ENCODE measurements at regions of chr7 and their contacts with region 1.

Region 1: GRCh38 chr7:974820-975681 is at the start of gene COX19:
- DNase-seq: peak; percentile 91
- H3K4me3 Mint-ChIP-seq: peak within 1 kb of the TSS; percentile 92
- H3K27ac Mint-ChIP-seq: peak within 1 kb of the TSS; percentile 91
- H3K4me1 Mint-ChIP-seq: peaks cover 33% of the 10 kb centered on the region
- H3K27me3 Mint-ChIP-seq: no peaks in the 10 kb centered on the region
- total RNA-seq, gene COX19: 12.6 to 15.2 TPM

Region 2: GRCh38 chr7:101146-102046 is 873.7 kb before region 1 on chr7:
- CTCF ChIA-PET with region 1: no interaction called
- intact Hi-C with region 1: no loop called
- DNase-seq: no peak
- H3K4me3 Mint-ChIP-seq: no peak overlapping the region
- H3K27ac Mint-ChIP-seq: no peak overlapping the region
- H3K4me1 Mint-ChIP-seq: peaks cover 4% of the 10 kb centered on the region
- H3K27me3 Mint-ChIP-seq: peaks cover 3% of the 10 kb centered on the region

Region 3: GRCh38 chr7:726084-726853 is 248.8 kb before region 1 on chr7 and contains the start of gene DNAAF5:
- CTCF ChIA-PET with region 1: no interaction called
- intact Hi-C with region 1: no loop called
- DNase-seq: peak; percentile 88
- H3K4me3 Mint-ChIP-seq: peak within 1 kb of the TSS; percentile 84
- H3K27ac Mint-ChIP-seq: peak within 1 kb of the TSS; percentile 65
- H3K4me1 Mint-ChIP-seq: peaks cover 31% of the 10 kb centered on the region
- H3K27me3 Mint-ChIP-seq: no peaks in the 10 kb centered on the region
- total RNA-seq, gene DNAAF5: 26.2 to 27.5 TPM

Region 4: DNA sequence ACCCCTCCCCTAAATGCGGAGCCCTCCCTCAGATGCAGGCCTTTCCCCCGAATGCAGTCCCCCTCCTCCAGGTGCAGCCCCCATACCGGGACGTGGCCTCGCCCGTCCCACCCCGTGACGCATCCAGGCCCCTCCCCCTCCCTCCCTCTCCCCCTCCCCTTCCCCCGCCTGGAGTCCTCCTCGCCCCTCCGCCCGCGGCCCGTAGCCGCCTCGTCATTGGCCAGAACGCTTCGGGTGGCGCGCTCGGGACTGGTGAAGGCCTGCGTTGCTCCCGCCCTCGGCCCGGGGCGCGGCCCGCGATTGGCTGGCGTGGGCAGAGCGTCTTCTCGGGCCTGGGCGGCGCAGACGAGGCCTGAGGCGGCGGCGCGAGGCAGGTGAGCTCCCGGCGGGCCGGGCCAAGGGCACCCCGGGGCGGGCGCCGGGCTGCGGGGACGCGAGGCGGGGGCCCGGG is 158.7 kb before region 1 on chr7:
- CTCF ChIA-PET with region 1: no interaction called
- intact Hi-C with region 1: loop called (anchors 1 kb)
- DNase-seq: peak; percentile 98
- H3K4me3 Mint-ChIP-seq: peak overlapping the region; percentile 81
- H3K27ac Mint-ChIP-seq: no peak overlapping the region
- H3K4me1 Mint-ChIP-seq: peaks cover 61% of the 10 kb centered on the region
- H3K27me3 Mint-ChIP-seq: peaks cover 5% of the 10 kb centered on the region

Region 5: GRCh38 chr7:909358-910329 is 65.4 kb before region 1 on chr7:
- CTCF ChIA-PET with region 1: interaction called, 31 read pairs
- intact Hi-C with region 1: no loop called
- DNase-seq: peak; percentile 40
- H3K4me3 Mint-ChIP-seq: peak overlapping the region; percentile 32
- H3K27ac Mint-ChIP-seq: no peak overlapping the region
- H3K4me1 Mint-ChIP-seq: peaks cover 12% of the 10 kb centered on the region
- H3K27me3 Mint-ChIP-seq: no peaks in the 10 kb centered on the region

Region 6: GRCh38 chr7:923108-924041 is 51.7 kb before region 1 on chr7:
- CTCF ChIA-PET with region 1: no interaction called
- intact Hi-C with region 1: loop called (anchors 1 kb)
- DNase-seq: peak; percentile 98
- H3K4me3 Mint-ChIP-seq: peak overlapping the region; percentile 78
- H3K27ac Mint-ChIP-seq: peak overlapping the region; percentile 91
- H3K4me1 Mint-ChIP-seq: peaks cover 43% of the 10 kb centered on the region
- H3K27me3 Mint-ChIP-seq: no peaks in the 10 kb centered on the region

Region 7: GRCh38 chr7:939843-940242 is 35.2 kb before region 1 on chr7:
- CTCF ChIA-PET with region 1: no interaction called
- intact Hi-C with region 1: loop called (anchors 2 kb)
- DNase-seq: no peak
- H3K4me3 Mint-ChIP-seq: no peak overlapping the region
- H3K27ac Mint-ChIP-seq: no peak overlapping the region
- H3K4me1 Mint-ChIP-seq: peaks cover 39% of the 10 kb centered on the region
- H3K27me3 Mint-ChIP-seq: no peaks in the 10 kb centered on the region

Region 8: DNA sequence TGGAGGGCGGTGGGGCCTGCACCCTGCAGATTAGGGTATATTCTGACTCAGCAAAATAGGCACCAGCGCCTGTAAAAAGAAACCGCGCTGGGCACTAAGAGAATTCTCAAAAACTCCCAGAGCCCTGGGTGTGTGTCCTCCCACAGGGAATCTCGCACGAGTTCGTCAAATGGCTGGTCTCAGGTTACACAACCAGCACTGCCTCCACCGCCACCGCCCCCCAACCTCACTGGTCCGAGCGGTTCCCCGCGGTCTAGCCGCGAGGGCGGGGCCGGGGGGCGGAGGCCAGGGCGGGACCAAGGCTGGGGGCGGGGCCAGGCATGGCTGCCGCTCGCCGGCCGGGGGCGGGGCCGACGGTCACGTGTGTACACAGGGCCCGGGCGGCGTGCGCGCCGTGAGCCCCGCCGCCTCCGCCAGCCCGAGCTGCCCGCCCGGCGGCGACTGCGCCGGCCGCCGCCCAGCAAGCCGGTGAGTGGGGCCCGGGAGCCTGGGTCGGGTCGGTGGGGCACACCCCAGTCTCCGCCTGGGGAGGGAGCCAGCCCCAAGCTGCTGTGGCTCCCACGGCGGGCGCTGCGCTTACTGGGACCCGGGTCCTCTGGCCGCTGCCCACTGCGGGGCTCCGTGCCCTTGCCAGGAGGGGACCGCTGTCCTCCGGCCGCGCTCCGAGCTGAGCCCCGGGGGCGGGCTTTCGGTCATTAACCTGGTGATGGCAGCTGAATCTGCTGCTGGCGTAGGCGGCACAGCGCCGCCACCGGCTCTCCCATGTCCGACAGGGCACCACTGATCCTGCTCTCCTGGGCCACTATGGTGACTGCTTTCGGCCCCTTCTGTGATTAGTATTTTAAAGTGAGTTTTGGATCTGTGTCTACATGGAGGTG is 69.4 kb after region 1 on chr7 and contains the start of gene GPR146:
- CTCF ChIA-PET with region 1: no interaction called
- intact Hi-C with region 1: loop called (anchors 2 kb)
- DNase-seq: peak; percentile 93
- H3K4me3 Mint-ChIP-seq: peak within 1 kb of the TSS; percentile 69
- H3K27ac Mint-ChIP-seq: peak within 1 kb of the TSS; percentile 70
- H3K4me1 Mint-ChIP-seq: peaks cover 57% of the 10 kb centered on the region
- H3K27me3 Mint-ChIP-seq: no peaks in the 10 kb centered on the region
- total RNA-seq, gene GPR146: 0.57 to 0.62 TPM

Region 9: GRCh38 chr7:1137510-1138167 is 162.6 kb after region 1 on chr7:
- CTCF ChIA-PET with region 1: no interaction called
- intact Hi-C with region 1: loop called (anchors 1 kb)
- DNase-seq: no peak
- H3K4me3 Mint-ChIP-seq: peak overlapping the region; percentile 84
- H3K27ac Mint-ChIP-seq: peak overlapping the region; percentile 42
- H3K4me1 Mint-ChIP-seq: peaks cover 20% of the 10 kb centered on the region
- H3K27me3 Mint-ChIP-seq: no peaks in the 10 kb centered on the region

Region 10: GRCh38 chr7:2954433-2954853 is 1979.4 kb after region 1 on chr7:
- CTCF ChIA-PET with region 1: no interaction called
- intact Hi-C with region 1: no loop called
- DNase-seq: peak; percentile 59
- H3K4me3 Mint-ChIP-seq: no peak overlapping the region
- H3K27ac Mint-ChIP-seq: peak overlapping the region; percentile 71
- H3K4me1 Mint-ChIP-seq: peaks cover 86% of the 10 kb centered on the region
- H3K27me3 Mint-ChIP-seq: no peaks in the 10 kb centered on the region

Measured in activated naive CD4-positive, alpha-beta T cell treated with anti-CD3 and anti-CD28 coated beads for 36 hours (primary cell).